ENCODE measurements at regions of chr18 and their contacts with region 1.

Region 1: GRCh38 chr18:70421471-70422390 is 132.9 kb downstream of the SOCS6 start:
- DNase-seq: peak; percentile 66 to 92
- H3K4me3 ChIP-seq: no peak overlapping the region
- H3K27ac ChIP-seq: peak overlapping the region; percentile 36 to 37
- H3K4me1 ChIP-seq: peaks cover 3 to 14% of the 10 kb centered on the region in 2 donors
- H3K27me3 ChIP-seq: no peaks in the 10 kb centered on the region
- CTCF ChIP-seq: no peak

Region 2: DNA sequence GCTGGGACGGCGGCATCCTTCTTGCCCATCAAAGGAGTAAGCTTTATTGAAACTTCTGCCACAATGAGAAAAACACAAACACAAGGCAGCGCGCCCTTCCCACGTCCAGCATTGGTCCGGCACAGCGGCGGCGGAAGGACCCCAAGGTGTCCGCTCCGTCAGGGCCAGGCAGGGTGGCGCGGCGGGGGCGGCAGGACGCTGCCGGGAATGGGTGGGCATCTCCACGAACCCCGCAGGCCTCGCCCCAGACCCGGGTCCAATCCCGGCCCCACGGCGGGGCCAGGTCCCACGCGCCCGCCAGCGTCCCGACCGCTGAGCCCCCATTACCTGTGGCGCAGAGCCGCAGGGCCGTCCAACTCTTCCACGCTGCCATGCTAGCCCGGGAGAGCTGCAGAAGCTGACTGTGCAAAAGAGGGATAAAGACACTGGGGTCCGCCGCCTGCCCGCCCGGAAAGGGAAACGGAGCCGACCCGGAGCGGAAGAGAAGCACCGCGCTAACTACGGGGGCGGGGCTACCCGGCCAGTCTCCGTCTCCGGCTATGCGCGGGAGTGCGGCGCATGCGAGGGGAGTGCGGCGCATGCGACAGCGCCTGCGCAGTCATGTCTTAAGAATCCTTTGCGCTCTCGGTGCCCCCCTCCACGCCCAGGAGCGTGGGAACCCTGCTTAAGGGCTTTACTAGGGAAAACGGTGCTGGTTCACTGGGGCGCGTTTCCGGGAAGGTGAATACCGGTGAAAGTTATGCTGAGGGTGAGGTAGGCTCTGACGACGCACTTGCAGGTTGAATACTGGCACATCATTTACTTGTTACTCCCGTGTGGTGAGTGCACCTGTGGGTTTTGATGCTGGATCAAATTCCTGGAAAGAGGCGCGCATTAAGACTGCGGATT is 1706.9 kb before region 1 on chr18 and contains the start of gene TMX3:
- intact Hi-C with region 1: loop called (anchors 10 kb)
- DNase-seq: peak; percentile 62 to 94
- H3K4me3 ChIP-seq: peak within 1 kb of the TSS; percentile 66 to 98
- H3K27ac ChIP-seq: peak within 1 kb of the TSS; percentile 40 to 76
- H3K4me1 ChIP-seq: peaks cover 0 to 8% of the 10 kb centered on the region in 2 donors
- H3K27me3 ChIP-seq: no peaks in the 10 kb centered on the region
- CTCF ChIP-seq: no peak
- total RNA-seq, gene TMX3: 12.9 TPM

Region 3: DNA sequence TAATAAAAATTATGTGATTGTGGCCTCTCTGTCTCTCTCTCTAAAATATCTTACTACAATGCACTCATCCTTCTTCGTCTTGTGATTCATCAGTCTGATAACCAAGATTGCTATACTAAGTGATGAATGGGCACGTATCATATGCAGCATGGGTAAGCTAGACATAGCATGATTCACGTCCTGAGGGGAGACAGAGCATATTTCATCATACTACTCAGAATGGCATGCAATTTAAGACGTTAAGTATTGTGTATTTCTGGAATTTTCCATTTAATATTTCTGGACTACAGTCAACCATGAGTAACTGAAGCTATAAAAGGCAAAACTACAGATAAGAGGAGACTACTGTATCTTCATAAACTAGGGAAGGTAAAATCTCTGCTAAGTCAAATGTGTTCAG is 377.1 kb before region 1 on chr18:
- intact Hi-C with region 1: loop called (anchors 10 kb)
- DNase-seq: no peak
- H3K4me3 ChIP-seq: no peak overlapping the region
- H3K27ac ChIP-seq: no peak overlapping the region
- H3K4me1 ChIP-seq: peaks cover 0 to 9% of the 10 kb centered on the region in 2 donors
- H3K27me3 ChIP-seq: no peaks in the 10 kb centered on the region
- CTCF ChIP-seq: no peak

Region 4: DNA sequence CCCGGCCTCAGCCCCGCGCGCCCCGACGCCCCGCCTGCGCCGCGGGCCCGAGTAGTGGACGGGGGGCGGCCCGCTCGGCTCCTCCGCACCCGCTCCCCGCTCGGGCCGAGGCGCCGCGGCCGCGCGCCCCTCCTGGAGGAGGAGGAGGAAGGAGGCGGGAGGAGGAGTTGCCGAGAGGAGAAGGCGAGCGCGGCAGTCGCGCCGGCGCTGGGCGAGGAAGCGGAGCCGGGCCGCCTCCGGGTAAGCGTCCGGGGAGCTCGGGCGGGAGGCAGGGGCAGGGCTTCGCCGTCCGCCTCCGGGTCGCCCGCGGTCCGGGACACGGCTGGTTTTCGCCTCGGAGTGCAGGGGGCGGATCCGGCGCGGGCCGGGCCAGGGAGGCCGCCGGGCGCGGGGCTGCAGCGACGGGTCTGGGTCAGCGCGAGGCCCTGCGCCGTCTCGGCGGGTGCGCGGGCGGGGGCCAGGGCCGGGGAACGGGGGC is 132.8 kb before region 1 on chr18 and contains the start of gene SOCS6:
- intact Hi-C with region 1: loop called (anchors 2 kb)
- DNase-seq: peak in 1 of 2 donors; percentile 76
- H3K4me3 ChIP-seq: peak within 1 kb of the TSS; percentile 87 to 93
- H3K27ac ChIP-seq: peak within 1 kb of the TSS; percentile 76 to 96
- H3K4me1 ChIP-seq: peaks cover 8 to 24% of the 10 kb centered on the region in 2 donors
- H3K27me3 ChIP-seq: no peaks in the 10 kb centered on the region
- CTCF ChIP-seq: no peak
- total RNA-seq, gene SOCS6: 5.5 TPM

Region 5: DNA sequence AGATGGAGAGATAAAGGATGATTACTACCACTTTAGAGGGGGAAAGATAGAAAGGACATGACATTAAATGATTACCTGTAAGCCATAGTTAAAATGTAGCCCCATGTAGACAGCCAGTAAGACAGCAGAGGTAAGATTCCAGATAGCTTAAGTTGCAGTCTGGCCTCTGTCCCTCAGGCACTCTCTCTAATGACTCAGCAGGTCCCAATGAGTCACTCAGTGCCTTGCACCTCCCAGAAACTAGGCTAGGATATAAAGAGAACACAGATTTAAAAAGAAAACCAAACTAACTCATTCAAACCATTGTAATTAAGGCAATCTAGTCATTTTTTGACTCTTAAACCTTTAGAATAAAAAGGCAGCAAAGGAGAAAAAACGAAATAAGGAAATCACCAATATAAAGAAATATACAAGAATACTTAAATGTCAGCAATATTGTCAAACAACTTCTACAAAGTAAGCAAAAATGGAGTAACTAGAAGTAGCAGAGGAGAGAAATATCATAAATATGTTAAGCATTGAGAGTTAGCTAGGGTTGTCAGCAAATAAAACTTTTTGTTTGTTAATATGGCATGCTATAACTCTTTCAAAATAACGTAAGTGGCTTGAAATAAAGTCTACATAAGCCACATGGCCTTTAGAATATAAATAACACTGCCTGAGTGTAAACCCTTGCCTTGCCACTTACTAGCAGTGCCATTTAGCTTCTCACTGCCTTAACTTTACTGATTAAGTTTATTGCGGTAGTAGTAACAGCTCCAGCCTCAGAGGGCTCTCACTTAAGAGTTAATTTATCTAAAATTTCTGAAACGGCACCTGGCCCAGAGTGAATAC is 84.4 kb before region 1 on chr18:
- intact Hi-C with region 1: loop called (anchors 5 kb)
- DNase-seq: peak; percentile 19 to 67
- H3K4me3 ChIP-seq: no peak overlapping the region
- H3K27ac ChIP-seq: peak overlapping the region; percentile 13 to 42
- H3K4me1 ChIP-seq: peaks cover 0 to 15% of the 10 kb centered on the region in 2 donors
- H3K27me3 ChIP-seq: no peaks in the 10 kb centered on the region
- CTCF ChIP-seq: no peak

Measured in ascending aorta (tissue), 2 donors.